ENCODE measurements at regions of chr4 and their contacts with region 1.

Region 1: GRCh38 chr4:113094802-113095201 is 45.3 kb downstream of the ANK2 start:
- DNase-seq: peak; percentile 0
- H3K4me3 ChIP-seq: no peak overlapping the region
- CTCF ChIP-seq: peak; percentile 25

Region 2: GRCh38 chr4:112951362-112952312 is 143.2 kb before region 1 on chr4:
- CTCF ChIA-PET with region 1: interaction called, 15 read pairs
- POLR2A ChIA-PET with region 1: no interaction called
- DNase-seq: no peak
- H3K4me3 ChIP-seq: no peak overlapping the region
- CTCF ChIP-seq: peak; percentile 6

Region 3: GRCh38 chr4:113106108-113106507 is 11.3 kb after region 1 on chr4:
- CTCF ChIA-PET with region 1: interaction called, 15 read pairs
- POLR2A ChIA-PET with region 1: no interaction called
- DNase-seq: peak; percentile 10
- H3K4me3 ChIP-seq: no peak overlapping the region
- CTCF ChIP-seq: peak; percentile 19